Endothelial cell of umbilical vein (primary cell): ENCODE measurements at regions of chr11 and their contacts with region 1.

Region 1: GRCh38 chr11:9137293-9138132 is 46.1 kb upstream of the SCUBE2 start:
- DNase-seq: peak; percentile 85
- H3K4me3 ChIP-seq: no peak overlapping the region
- H3K27ac ChIP-seq: peak overlapping the region; percentile 75
- H3K4me1 ChIP-seq: peaks cover 37% of the 10 kb centered on the region
- H3K27me3 ChIP-seq: no peaks in the 10 kb centered on the region
- CTCF ChIP-seq: peak; percentile 90 to 99
- POLR2A ChIP-seq: no peak

Region 2: GRCh38 chr11:8777907-8778767 is 359.4 kb before region 1 on chr11:
- CTCF ChIA-PET with region 1: no interaction called
- POLR2A ChIA-PET with region 1: no interaction called
- dilution Hi-C with region 1: no loop called
- intact Hi-C with region 1: no loop called
- DNase-seq: no peak
- H3K4me3 ChIP-seq: no peak overlapping the region
- H3K27ac ChIP-seq: no peak overlapping the region
- H3K4me1 ChIP-seq: no peaks in the 10 kb centered on the region
- H3K27me3 ChIP-seq: no peaks in the 10 kb centered on the region
- CTCF ChIP-seq: no peak
- POLR2A ChIP-seq: no peak

Region 3: GRCh38 chr11:8911029-8911826 is 226.3 kb before region 1 on chr11 and contains the start of gene AKIP1:
- CTCF ChIA-PET with region 1: interaction called, 65 read pairs
- POLR2A ChIA-PET with region 1: no interaction called
- dilution Hi-C with region 1: no loop called
- intact Hi-C with region 1: loop called (anchors 1 kb)
- DNase-seq: peak; percentile 98
- H3K4me3 ChIP-seq: peak within 1 kb of the TSS; percentile 63 to 95 (median 82)
- H3K27ac ChIP-seq: peak within 1 kb of the TSS; percentile 63
- H3K4me1 ChIP-seq: peaks cover 32% of the 10 kb centered on the region
- H3K27me3 ChIP-seq: no peaks in the 10 kb centered on the region
- CTCF ChIP-seq: no peak
- POLR2A ChIP-seq: peak; percentile 42
- total RNA-seq, gene AKIP1: 21.9 and 23.4 TPM in 2 replicates

Region 4: DNA sequence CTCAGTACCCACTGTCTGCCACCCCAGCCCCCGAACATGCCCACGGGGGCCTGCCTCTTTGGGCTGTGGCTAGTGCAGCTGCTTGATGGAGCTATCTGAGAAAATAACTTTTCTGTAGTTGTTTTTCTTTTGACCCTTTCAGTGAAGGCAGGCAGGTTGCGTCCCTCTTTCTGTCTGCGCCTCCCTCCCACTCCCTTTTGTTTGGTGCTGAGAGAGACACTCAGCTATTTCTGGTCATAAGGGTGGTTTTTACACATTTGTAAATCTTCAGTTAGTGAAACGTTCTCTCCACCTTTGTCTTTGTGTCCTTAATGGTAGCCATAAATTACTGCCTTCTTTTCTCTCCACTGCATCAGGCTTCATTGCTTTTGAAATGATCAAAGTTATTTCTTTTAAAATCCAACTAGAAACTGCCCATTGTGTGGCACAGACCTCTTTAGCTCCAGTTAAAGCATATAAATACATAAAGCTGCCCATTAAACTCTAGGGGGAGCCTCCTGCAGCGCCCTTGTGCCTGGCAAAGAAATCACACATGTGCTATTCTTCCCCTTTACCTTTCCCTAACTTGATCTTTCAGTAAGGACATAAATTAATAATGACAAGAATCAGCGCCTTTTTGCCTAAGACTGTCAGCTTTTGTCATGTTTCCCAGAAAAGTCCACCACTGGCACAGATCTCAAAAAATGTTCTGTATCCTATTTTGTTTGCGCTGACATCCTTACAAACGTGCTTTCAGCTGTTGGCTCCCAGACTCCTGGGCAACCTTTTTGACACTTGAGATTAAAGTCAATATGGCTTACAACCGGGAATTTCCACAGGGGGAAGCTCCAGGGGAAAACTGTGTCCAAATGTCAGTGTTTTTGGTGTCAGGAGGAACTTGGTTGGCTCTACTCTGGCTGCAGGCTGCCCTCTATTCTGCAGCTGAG is 44.4 kb before region 1 on chr11:
- CTCF ChIA-PET with region 1: interaction called, 70 read pairs
- POLR2A ChIA-PET with region 1: no interaction called
- dilution Hi-C with region 1: no loop called
- intact Hi-C with region 1: loop called (anchors 2 kb)
- DNase-seq: peak; percentile 24
- H3K4me3 ChIP-seq: no peak overlapping the region
- H3K27ac ChIP-seq: no peak overlapping the region
- H3K4me1 ChIP-seq: no peaks in the 10 kb centered on the region
- H3K27me3 ChIP-seq: peaks cover 4 to 12% of the 10 kb centered on the region in 2 experiments
- CTCF ChIP-seq: peak in 1 of 2 donors; percentile 35
- POLR2A ChIP-seq: no peak

Region 5: DNA sequence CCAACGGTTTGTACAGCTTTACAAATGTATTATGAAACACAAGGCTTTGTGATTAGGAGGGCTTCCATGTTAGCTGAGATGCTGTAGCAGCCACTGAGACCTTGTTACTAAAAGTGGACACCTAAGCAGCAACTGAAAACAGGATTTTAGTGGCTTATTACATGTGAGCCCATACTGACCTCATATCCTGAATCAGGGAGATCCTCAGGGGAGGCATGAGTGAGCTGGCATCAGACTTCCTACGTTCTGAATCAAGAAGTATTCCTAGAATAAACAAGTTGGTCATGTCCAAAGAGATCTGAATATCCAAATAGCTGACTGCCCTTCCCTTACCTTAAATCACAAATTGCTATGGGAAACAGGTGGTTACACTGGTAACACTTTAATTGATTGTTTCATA is 13.0 kb after region 1 on chr11:
- CTCF ChIA-PET with region 1: interaction called, 20 read pairs
- POLR2A ChIA-PET with region 1: no interaction called
- dilution Hi-C with region 1: no loop called
- intact Hi-C with region 1: no loop called
- DNase-seq: peak; percentile 85
- H3K4me3 ChIP-seq: no peak overlapping the region
- H3K27ac ChIP-seq: peak overlapping the region; percentile 82
- H3K4me1 ChIP-seq: peaks cover 26% of the 10 kb centered on the region
- H3K27me3 ChIP-seq: no peaks in the 10 kb centered on the region
- CTCF ChIP-seq: no peak
- POLR2A ChIP-seq: no peak